ENCODE measurements at regions of chr19 and their contacts with region 1.

Region 1: DNA sequence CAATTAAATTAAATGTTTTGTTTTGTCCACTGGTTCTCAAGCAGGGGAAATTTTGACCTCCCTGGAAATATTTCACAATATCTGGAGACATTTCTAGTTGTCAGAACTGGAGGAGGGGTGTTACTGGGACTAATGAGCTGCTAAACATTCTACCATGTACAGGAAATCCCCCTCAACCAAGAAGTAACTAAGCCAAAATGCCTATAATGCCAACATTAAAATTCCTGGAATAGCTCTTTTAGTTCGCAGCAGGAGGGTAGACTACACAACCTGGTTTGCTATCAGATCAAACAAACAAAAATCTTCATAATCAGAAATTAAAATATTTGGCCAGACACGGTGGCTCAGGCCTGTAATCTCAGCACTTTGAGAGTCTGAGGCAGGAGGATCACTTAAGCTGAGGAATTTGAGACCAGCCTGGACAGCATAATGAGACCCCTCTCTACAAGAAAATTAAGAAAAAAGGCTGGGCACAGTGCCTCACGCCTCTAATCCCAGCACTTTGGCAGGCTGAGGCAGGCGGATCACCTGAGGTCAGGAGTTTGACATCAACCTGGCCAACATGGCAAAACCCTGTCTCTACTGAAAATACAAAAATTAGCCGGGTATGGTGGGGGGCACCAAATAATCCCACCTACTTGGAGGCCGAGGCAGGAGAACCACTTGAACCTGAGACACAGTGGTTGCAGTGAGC is 13.7 kb upstream of the SMARCA4 start:
- DNase-seq: no peak
- ATAC-seq: no peak
- H3K4me3 Mint-ChIP-seq: no peak overlapping the region
- H3K27ac Mint-ChIP-seq: no peak overlapping the region
- H3K4me1 Mint-ChIP-seq: peaks cover 4% of the 10 kb centered on the region
- H3K27me3 Mint-ChIP-seq: no peaks in the 10 kb centered on the region
- CTCF ChIP-seq: no peak

Region 2: GRCh38 chr19:10960314-10961072 is 13.4 kb after region 1 on chr19 and contains the start of gene SMARCA4:
- CTCF ChIA-PET with region 1: interaction called, 25 read pairs
- POLR2A ChIA-PET with region 1: interaction called, 6 read pairs
- intact Hi-C with region 1: no loop called
- DNase-seq: peak; percentile 97
- ATAC-seq: peak; percentile 82
- H3K4me3 Mint-ChIP-seq: peak within 1 kb of the TSS; percentile 89
- H3K27ac Mint-ChIP-seq: peak within 1 kb of the TSS; percentile 91
- H3K4me1 Mint-ChIP-seq: peaks cover 34% of the 10 kb centered on the region
- H3K27me3 Mint-ChIP-seq: no peaks in the 10 kb centered on the region
- CTCF ChIP-seq: no peak
- total RNA-seq, gene SMARCA4: 97.0 to 98.7 TPM

Region 3: DNA sequence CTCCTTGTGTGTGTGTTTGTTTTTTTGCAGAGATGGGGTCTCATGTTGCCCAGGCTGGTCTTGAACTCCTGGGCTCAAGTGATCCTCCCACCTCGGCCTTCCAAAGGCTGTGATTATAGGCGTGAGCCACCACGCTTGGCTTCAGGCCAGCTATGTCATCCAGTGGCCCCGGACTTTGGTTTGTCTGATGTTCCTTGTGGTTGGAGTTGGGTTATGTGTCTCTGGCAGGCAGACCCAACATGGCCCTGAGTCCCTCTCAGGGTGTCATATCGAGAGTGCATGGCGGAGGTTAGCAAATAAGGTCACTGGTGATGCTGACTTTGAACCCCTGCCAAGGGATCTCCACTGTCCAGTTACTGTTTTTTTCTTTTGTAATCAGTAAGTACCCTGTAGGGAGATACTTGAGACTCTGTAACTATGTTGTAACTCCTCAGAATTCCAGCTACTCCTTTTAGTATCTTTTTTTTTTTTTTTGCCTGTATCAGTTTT is 51.0 kb after region 1 on chr19:
- CTCF ChIA-PET with region 1: interaction called, 5 read pairs
- POLR2A ChIA-PET with region 1: no interaction called
- intact Hi-C with region 1: loop called (anchors 10 kb)
- DNase-seq: no peak
- ATAC-seq: no peak
- H3K4me3 Mint-ChIP-seq: no peak overlapping the region
- H3K27ac Mint-ChIP-seq: no peak overlapping the region
- H3K4me1 Mint-ChIP-seq: no peaks in the 10 kb centered on the region
- H3K27me3 Mint-ChIP-seq: no peaks in the 10 kb centered on the region
- CTCF ChIP-seq: no peak

Measured in activated CD8-positive, alpha-beta T cell treated with anti-CD3 and anti-CD28 coated beads for 36 hours (primary cell).